Sigmoid colon (tissue), 7 donors: ENCODE measurements at regions of chrX and their contacts with region 1.

Region 1: DNA sequence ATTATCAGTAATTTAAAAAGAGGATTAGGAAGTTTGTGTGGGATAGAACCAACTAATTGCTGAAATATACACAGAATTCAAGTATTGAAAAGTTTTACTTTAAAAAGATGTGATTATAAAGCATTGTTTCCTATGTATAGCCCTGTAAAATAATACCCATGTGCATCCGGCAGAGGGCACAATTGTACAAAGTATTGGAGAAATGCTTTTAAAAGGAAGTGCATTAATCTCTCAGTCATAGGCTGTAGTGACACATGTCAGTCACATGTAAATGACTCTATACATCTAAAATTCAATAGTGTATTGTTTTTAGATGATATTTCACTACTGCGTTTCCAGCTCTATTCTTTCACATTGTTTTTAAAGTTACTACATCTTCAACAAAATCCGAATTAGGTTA is 9.7 kb upstream of the GEMIN8 start:
- DNase-seq: no peak
- H3K4me3 ChIP-seq: no peak overlapping the region
- H3K27ac ChIP-seq: no peak overlapping the region
- H3K4me1 ChIP-seq: no peaks in the 10 kb centered on the region
- H3K27me3 ChIP-seq: no peaks in the 10 kb centered on the region
- CTCF ChIP-seq: peak in 3 of 4 experiments; percentile 27 to 39 (median 27)
- EP300 ChIP-seq: no peak
- POLR2A ChIP-seq: no peak

Region 2: GRCh38 chrX:13790206-13791131 is 248.9 kb before region 1 on chrX:
- intact Hi-C with region 1: no loop called
- DNase-seq: no peak
- H3K4me3 ChIP-seq: no peak overlapping the region
- H3K27ac ChIP-seq: peak overlapping the region; percentile 34 to 70 (median 50)
- H3K4me1 ChIP-seq: peaks cover 0 to 15% (median 4%) of the 10 kb centered on the region in 4 donors
- H3K27me3 ChIP-seq: no peaks in the 10 kb centered on the region
- CTCF ChIP-seq: no peak
- EP300 ChIP-seq: no peak
- POLR2A ChIP-seq: no peak

Region 3: GRCh38 chrX:14073556-14073955 is 34.2 kb after region 1 on chrX:
- intact Hi-C with region 1: no loop called
- DNase-seq: no peak
- H3K4me3 ChIP-seq: no peak overlapping the region
- H3K27ac ChIP-seq: no peak overlapping the region
- H3K4me1 ChIP-seq: peaks cover 0 to 10% (median 4%) of the 10 kb centered on the region in 4 donors
- H3K27me3 ChIP-seq: no peaks in the 10 kb centered on the region
- CTCF ChIP-seq: no peak
- EP300 ChIP-seq: no peak
- POLR2A ChIP-seq: no peak

Region 4: GRCh38 chrX:15143050-15143824 is 1103.9 kb after region 1 on chrX:
- intact Hi-C with region 1: loop called (anchors 1 kb)
- DNase-seq: no peak
- H3K4me3 ChIP-seq: no peak overlapping the region
- H3K27ac ChIP-seq: no peak overlapping the region
- H3K4me1 ChIP-seq: no peaks in the 10 kb centered on the region
- H3K27me3 ChIP-seq: no peaks in the 10 kb centered on the region
- CTCF ChIP-seq: peak; percentile 40 to 52 (median 42)
- EP300 ChIP-seq: no peak
- POLR2A ChIP-seq: no peak

Region 5: DNA sequence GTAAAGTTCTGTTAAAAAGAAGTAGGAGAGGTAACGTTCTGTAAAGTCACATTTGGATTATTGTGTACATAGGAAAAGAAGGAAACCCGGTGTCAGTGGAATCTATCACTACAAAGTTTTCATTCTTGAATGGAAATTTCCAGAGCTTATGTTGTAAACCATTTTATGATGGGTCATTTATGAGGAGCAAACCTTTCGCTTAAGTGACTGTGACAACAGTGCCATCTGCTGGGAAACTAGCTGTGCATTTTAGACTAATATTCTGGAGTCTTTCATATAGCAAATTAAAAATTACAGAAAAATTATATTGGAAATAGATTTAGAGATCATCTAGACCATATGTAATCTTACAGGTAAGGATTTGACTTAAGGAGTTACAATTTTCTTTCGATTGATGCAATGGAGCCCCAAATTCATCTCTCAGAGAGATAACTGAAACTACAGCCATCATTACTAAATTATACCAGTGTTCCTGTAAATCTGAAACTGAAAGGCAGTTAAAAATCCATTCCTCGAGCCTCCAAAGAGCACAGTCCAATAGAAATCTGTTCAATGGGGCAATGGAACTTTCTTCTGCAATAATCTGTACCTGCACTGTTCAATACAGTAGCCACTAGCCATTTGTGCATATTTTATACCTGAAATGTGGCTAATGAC is 1203.7 kb after region 1 on chrX:
- intact Hi-C with region 1: loop called (anchors 5 kb)
- DNase-seq: no peak
- H3K4me3 ChIP-seq: no peak overlapping the region
- H3K27ac ChIP-seq: no peak overlapping the region
- H3K4me1 ChIP-seq: no peaks in the 10 kb centered on the region
- H3K27me3 ChIP-seq: no peaks in the 10 kb centered on the region
- CTCF ChIP-seq: peak in 2 of 4 experiments; percentile 15 to 18
- EP300 ChIP-seq: no peak
- POLR2A ChIP-seq: no peak